ENCODE measurements at regions of chr9 and their contacts with region 1.

Region 1: DNA sequence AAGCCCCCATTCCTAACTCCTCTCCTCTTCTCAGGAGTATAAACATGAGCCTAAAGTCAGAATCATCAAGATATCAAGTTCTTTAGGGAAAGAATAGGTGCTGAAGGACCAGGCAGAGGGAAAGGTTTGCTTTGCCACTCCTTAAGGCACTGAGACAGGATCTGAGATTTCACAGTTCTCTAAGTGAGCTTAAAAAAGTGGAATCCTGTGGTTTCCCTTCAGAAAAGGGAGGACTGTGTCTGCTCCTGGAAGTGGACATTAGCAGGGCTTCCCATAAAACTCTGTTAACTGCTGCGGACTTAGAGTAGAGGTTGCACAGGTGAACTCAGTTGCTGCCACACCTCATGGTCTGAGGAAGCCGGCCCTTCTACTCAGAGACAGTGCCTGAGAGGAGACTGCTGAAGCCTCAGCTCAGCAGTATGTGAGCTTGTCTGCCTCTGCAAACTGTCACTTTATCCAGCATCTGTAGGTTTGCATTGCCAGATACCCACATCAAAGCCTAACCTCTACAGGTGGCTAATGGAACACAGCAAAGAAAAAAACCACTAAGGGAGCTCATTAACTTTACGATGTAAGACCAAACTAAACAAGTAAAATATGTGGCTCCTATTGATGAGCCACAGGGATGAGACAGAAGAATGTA is 42.9 kb downstream of the RIC1 start:
- DNase-seq: peak; percentile 6
- H3K4me3 Mint-ChIP-seq: no peak overlapping the region
- H3K27ac Mint-ChIP-seq: no peak overlapping the region
- H3K4me1 Mint-ChIP-seq: peaks cover 15% of the 10 kb centered on the region
- H3K27me3 Mint-ChIP-seq: no peaks in the 10 kb centered on the region

Region 2: GRCh38 chr9:5688109-5688508 is 16.3 kb after region 1 on chr9:
- intact Hi-C with region 1: loop called (anchors 2 kb)
- DNase-seq: no peak
- H3K4me3 Mint-ChIP-seq: no peak overlapping the region
- H3K27ac Mint-ChIP-seq: no peak overlapping the region
- H3K4me1 Mint-ChIP-seq: no peaks in the 10 kb centered on the region
- H3K27me3 Mint-ChIP-seq: no peaks in the 10 kb centered on the region